ENCODE measurements at regions of chr6 and their contacts with region 1.

Region 1: GRCh38 chr6:111841822-111842221 is 31.4 kb downstream of the FYN start:
- DNase-seq: no peak
- ATAC-seq: no peak
- H3K4me3 ChIP-seq: no peak overlapping the region
- H3K27ac ChIP-seq: no peak overlapping the region
- H3K4me1 ChIP-seq: no peaks in the 10 kb centered on the region
- H3K27me3 ChIP-seq: no peaks in the 10 kb centered on the region
- CTCF ChIP-seq: no peak
- POLR2A ChIP-seq: no peak
- RAD21 ChIP-seq: no peak

Region 2: GRCh38 chr6:111862741-111863140 is 20.9 kb after region 1 on chr6:
- CTCF ChIA-PET with region 1: no interaction called
- POLR2A ChIA-PET with region 1: no interaction called
- RAD21 ChIA-PET with region 1: no interaction called
- intact Hi-C with region 1: loop called (anchors 1 kb)
- DNase-seq: no peak
- ATAC-seq: no peak
- H3K4me3 ChIP-seq: no peak overlapping the region
- H3K27ac ChIP-seq: no peak overlapping the region
- H3K4me1 ChIP-seq: no peaks in the 10 kb centered on the region
- H3K27me3 ChIP-seq: no peaks in the 10 kb centered on the region
- CTCF ChIP-seq: no peak
- POLR2A ChIP-seq: no peak
- RAD21 ChIP-seq: no peak

Measured in HCT116 (cell line).